ENCODE measurements at regions of chr7 and their contacts with region 1.

Region 1: GRCh38 chr7:138008547-138009349 is 6.9 kb upstream of the CREB3L2 start:
- DNase-seq: peak in 1 of 2 donors; percentile 21
- ATAC-seq: peak; percentile 40 to 80 (median 58)
- H3K4me3 ChIP-seq: no peak overlapping the region
- H3K27ac ChIP-seq: no peak overlapping the region
- H3K4me1 ChIP-seq: peaks cover 0 to 5% (median 0%) of the 10 kb centered on the region in 9 donors
- H3K27me3 ChIP-seq: no peaks in the 10 kb centered on the region
- CTCF ChIP-seq: peak; percentile 86 to 96 (median 92)

Region 2: GRCh38 chr7:137606061-137606674 is 402.6 kb before region 1 on chr7:
- intact Hi-C with region 1: loop called in 1 of 10 experiments (anchors 2 kb)
- DNase-seq: no peak
- ATAC-seq: no peak
- H3K4me3 ChIP-seq: no peak overlapping the region
- H3K27ac ChIP-seq: no peak overlapping the region
- H3K4me1 ChIP-seq: no peaks in the 10 kb centered on the region
- H3K27me3 ChIP-seq: peaks cover 0 to 9% (median 6%) of the 10 kb centered on the region in 7 donors
- CTCF ChIP-seq: peak in 8 of 9 donors; percentile 13 to 74 (median 62)

Region 3: GRCh38 chr7:138023618-138024342 is 15.0 kb after region 1 on chr7:
- intact Hi-C with region 1: no loop called
- DNase-seq: no peak
- ATAC-seq: no peak
- H3K4me3 ChIP-seq: no peak overlapping the region
- H3K27ac ChIP-seq: no peak overlapping the region
- H3K4me1 ChIP-seq: no peaks in the 10 kb centered on the region
- H3K27me3 ChIP-seq: peaks cover 0 to 7% (median 0%) of the 10 kb centered on the region in 7 donors
- CTCF ChIP-seq: no peak

Measured in heart right ventricle (tissue), 16 donors.